Activated CD4-positive, alpha-beta T cell treated with anti-CD3 and anti-CD28 coated beads, Interleukin-2, amount 10 ng/mL, durations not matched to agents 24 days and 14 days (primary cell): ENCODE measurements at regions of chr12 and their contacts with region 1.

Region 1: DNA sequence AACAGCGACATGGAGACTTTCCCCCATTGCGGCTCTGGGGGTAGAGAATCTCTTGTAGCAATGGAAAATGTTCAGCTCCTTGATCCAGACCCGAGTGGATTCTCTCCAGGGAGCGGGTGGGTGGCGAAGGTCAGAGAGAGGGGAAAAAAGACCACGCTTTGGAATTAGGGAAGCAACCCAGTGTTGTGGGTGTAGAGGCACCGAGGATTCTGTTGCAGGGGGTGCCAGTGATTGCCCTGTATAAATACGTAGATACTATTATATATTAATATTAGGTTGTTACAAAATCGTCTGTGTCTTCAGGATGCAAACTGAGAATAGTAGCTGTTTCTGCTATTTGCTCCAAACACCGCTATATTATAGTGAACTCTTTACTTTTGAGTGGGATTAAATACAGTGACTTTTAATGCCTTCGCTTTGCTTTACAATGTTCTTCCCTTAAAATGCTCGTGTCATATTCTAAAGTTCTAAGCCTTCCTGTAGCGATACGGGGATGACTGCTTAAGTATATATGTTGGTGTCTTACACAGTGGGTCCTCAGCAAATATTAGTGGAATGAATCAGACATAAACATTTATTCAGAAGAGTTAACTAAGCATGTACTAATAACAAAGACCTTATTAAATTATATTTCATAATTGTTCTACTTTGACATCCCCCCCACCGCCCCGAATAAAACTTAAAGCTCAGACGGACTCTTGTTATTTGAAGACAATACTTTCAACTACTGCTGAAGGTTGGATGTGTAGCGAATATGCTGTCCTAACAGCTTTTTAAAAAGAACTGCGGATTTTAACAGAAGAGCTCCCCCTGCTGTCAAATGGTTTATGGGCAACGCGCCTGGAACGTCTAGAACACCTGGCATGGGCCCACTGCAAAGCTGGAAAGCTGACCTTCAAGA is 136.4 kb upstream of the KRAS start:
- DNase-seq: peak; percentile 95
- H3K4me3 Mint-ChIP-seq: peak overlapping the region; percentile 92
- H3K27ac Mint-ChIP-seq: peak overlapping the region; percentile 98
- H3K4me1 Mint-ChIP-seq: peaks cover 56% of the 10 kb centered on the region
- H3K27me3 Mint-ChIP-seq: no peaks in the 10 kb centered on the region

Region 2: GRCh38 chr12:25195056-25195971 is 191.8 kb before region 1 on chr12 and contains the starts of genes DNAI7 and ETFRF1:
- intact Hi-C with region 1: loop called (anchors 1 kb)
- DNase-seq: peak; percentile 98
- H3K4me3 Mint-ChIP-seq: peak within 1 kb of the TSS; percentile 94
- H3K27ac Mint-ChIP-seq: peak within 1 kb of the TSS; percentile 93
- H3K4me1 Mint-ChIP-seq: peaks cover 23% of the 10 kb centered on the region
- H3K27me3 Mint-ChIP-seq: no peaks in the 10 kb centered on the region
- total RNA-seq, gene DNAI7: not detected in 2 replicates
- total RNA-seq, gene ETFRF1: 9.9 TPM in 2 replicates

Region 3: GRCh38 chr12:25208554-25208953 is 178.5 kb before region 1 on chr12:
- intact Hi-C with region 1: loop called (anchors 1 kb)
- DNase-seq: peak; percentile 17
- H3K4me3 Mint-ChIP-seq: no peak overlapping the region
- H3K27ac Mint-ChIP-seq: no peak overlapping the region
- H3K4me1 Mint-ChIP-seq: peaks cover 2% of the 10 kb centered on the region
- H3K27me3 Mint-ChIP-seq: no peaks in the 10 kb centered on the region

Region 4: DNA sequence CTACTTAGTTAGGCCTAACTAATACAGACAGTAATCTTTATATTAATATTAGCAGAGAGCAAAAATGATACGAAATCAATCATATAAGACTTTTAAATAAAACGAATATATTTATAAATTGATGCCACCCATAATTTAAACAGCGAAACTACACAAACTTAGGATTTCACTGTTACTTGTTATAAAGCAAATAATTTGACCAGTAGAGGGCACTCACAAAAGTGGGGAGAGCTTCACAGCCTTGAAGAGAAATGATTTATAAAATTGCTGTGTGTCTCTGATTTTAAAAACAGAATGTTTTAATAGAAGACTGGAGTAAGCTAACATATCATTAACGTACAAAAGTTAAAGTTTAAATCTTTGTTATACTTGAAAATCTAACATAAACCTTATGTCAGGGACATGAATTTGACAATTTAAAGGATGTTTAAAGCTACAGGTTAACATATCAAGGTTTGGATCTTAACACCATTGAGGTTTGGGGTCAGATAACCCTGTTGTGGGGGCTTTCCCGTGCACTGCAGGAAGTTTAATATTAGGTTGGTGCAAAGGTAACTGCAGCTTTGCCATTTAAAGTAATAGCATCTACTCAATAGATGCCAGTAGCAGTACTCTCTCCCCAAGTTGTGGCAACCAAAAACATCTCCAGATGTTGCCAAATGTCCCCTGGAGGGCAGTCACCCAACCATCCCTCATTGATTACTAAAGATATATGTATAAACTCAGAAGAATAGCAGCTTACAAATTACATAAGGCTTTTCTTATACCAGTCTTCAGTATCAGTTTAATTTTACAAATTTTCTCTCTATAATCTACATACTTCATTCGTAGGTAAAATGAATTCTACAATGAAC is 145.7 kb before region 1 on chr12:
- intact Hi-C with region 1: loop called (anchors 1 kb)
- DNase-seq: peak; percentile 66
- H3K4me3 Mint-ChIP-seq: no peak overlapping the region
- H3K27ac Mint-ChIP-seq: no peak overlapping the region
- H3K4me1 Mint-ChIP-seq: peaks cover 22% of the 10 kb centered on the region
- H3K27me3 Mint-ChIP-seq: no peaks in the 10 kb centered on the region